ENCODE measurements at regions of chr9 and their contacts with region 1.

Region 1: DNA sequence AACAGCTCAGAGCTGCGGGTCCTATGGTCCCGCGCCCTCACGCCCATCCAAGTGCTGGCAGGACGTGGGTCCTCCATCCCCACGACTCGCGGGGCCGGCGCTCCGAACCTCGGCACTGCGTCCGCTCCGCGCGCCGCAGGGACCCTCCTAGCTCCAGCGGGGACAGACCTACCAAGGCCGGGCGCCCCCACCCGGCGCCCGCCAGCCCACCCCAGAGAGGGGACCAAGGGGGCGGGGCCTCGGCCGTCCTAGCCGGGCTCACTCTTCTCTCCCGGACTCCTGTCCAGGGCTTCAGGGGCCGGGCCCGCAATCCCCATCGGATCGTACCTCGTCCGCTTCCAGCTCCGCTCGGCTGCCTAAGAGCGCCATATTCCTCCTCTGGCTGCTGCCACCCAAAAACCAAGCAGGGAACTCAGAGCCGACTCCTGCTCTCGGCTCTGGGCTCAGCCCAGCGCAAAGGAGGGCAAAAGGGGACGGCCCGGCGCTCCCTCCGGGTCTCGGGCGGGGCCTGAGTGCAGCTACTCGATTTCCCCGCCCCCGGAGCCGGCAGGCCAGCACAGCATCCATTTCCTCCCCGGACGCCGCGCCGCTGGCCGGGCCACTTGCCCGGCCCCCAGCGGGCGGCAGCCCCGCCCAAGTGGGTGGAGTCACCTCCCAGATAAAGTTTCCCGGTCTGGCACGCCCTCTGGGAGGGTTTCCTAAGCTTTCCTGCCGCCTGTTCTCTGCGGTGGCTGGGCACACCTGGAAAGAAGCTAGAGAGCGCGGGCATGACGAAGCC is at the start of gene TTC39B:
- DNase-seq: peak; percentile 71 to 97
- H3K4me3 ChIP-seq: peak within 1 kb of the TSS; percentile 82 to 97
- H3K27ac ChIP-seq: peak within 1 kb of the TSS; percentile 89 to 91
- H3K4me1 ChIP-seq: peaks cover 3 to 4% of the 10 kb centered on the region in 2 donors
- H3K27me3 ChIP-seq: no peaks in the 10 kb centered on the region
- CTCF ChIP-seq: peak in 1 of 3 experiments; percentile 2
- total RNA-seq, gene TTC39B: 2.7 TPM

Region 2: GRCh38 chr9:15249042-15249818 is 57.7 kb before region 1 on chr9:
- intact Hi-C with region 1: loop called (anchors 5 kb)
- DNase-seq: no peak
- H3K4me3 ChIP-seq: peak overlapping the region in 1 of 2 donors; percentile 45
- H3K27ac ChIP-seq: peak overlapping the region; percentile 70 to 80
- H3K4me1 ChIP-seq: peaks cover 4 to 26% of the 10 kb centered on the region in 2 donors
- H3K27me3 ChIP-seq: no peaks in the 10 kb centered on the region
- CTCF ChIP-seq: no peak

Region 3: DNA sequence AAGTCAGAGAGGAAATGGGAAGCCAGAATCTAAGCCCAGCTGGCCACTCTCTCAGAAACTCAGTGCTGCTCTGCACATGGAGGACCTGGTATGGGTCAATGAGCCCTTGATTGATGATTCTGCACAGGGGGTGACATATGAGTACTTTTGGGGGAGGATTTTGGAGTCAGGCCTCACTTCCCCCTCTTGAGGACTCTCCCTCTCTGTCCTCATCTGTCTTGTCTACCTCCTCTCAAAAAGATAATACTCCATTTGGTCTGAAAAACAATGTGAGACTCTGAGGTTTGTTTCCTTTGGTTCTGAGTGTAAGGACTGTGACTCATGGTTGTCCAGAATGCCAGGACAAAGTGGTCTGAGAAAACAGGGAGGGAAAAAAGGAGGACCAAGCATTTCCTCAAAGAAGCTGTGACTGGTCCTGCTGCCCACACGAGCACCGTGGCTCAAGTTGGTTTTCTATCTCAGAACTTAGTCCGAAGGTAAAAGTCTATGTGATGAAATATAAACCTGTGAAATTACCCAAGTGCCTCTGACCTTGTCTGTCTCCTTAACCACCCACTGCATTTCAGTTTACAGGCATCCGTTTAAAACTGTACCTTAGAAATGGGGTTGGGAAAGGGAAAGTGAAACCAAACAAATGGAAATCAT is 11.1 kb before region 1 on chr9:
- intact Hi-C with region 1: loop called (anchors 1 kb)
- DNase-seq: no peak
- H3K4me3 ChIP-seq: peak overlapping the region; percentile 64 to 68
- H3K27ac ChIP-seq: peak overlapping the region; percentile 88 to 92
- H3K4me1 ChIP-seq: peaks cover 10 to 33% of the 10 kb centered on the region in 2 donors
- H3K27me3 ChIP-seq: no peaks in the 10 kb centered on the region
- CTCF ChIP-seq: no peak

Region 4: DNA sequence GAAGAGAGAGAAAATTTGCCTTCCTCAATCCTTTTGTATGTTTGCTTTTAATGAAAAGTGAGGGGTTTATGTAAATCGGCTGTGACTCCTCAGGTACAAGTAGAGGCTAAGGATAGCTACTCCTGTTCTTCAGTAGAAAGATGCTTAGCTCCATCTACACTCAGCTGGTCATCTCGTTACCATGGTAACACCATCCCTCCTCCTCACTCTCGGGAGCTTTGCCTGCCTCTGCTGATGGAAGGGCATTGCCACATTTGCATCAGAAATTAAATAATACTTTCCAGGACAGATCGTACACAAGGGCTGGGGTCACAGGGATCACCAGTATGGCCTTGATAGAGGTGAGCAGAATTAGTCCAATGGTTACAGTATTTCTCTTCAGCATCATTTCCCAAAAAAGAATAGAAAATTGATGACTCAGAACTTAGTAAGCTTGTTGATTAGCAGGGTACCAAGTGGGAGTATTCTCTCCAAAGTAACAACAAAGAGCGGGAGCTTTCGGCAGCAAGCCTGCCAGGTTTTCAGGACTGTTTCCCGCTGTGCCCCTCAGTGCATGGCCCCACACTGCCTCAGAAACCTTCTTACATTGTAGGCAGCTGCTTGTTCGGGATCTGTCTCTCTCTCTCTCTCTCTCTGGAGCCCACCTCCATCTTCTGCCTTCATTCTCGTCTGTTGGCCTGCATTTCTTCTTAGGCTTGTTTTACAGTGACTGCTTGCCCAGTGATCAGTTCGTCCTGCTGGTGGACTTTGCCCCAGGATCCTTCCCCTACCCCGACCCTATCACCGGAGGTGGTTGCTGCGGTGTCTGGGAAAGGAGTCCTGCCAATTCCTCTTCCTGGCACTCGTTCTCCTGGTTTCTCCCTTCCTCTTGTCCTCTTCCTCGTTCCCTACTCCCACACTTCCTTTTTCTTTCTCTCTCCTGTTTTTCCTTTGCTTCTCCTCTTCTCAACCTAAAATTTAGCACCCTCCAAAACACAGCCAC is 63.8 kb after region 1 on chr9:
- intact Hi-C with region 1: loop called (anchors 5 kb)
- DNase-seq: no peak
- H3K4me3 ChIP-seq: no peak overlapping the region
- H3K27ac ChIP-seq: no peak overlapping the region
- H3K4me1 ChIP-seq: peaks cover 0 to 2% of the 10 kb centered on the region in 2 donors
- H3K27me3 ChIP-seq: no peaks in the 10 kb centered on the region
- CTCF ChIP-seq: no peak

Region 5: DNA sequence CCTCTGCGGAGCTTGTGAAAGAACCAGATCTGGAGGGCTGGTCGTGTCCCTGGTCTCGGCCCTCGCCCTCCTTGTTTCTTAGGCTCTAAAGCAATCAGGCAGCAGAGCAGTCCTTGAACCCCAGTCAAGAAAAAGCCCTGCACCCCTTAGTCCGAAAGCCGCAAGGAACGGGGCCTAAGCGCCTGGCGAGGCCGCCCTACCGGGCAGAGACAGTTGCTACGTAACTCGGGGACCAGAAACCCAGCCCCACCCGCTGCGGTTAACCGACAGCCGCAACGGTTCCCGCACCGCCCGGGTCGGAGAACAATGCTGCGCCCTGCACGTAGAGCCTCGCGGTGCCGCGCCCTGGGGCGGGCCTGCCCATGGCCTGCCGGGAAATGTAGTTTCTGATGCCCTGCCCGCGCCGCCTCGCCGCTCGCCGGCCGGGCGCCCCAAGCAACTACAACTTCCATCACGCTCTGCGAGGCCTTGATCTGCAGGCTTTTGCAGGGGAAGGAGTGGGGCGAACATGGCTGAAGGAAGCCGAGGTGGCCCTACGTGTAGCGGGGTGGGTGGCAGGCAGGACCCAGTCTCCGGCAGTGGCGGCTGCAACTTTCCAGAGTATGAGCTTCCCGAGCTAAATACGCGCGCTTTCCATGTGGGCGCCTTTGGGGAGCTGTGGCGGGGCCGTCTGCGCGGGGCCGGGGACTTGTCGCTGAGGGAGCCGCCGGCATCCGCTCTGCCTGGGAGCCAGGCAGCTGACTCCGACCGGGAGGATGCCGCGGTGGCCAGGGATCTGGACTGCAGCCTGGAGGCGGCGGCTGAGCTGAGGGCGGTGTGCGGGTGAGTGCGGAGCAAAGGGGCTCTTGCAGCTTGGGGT is 115.7 kb after region 1 on chr9 and contains the start of gene SNAPC3:
- intact Hi-C with region 1: loop called (anchors 5 kb)
- DNase-seq: peak; percentile 75 to 95
- H3K4me3 ChIP-seq: peak within 1 kb of the TSS; percentile 85 to 87
- H3K27ac ChIP-seq: peak within 1 kb of the TSS; percentile 84 to 89
- H3K4me1 ChIP-seq: peaks cover 0 to 17% of the 10 kb centered on the region in 2 donors
- H3K27me3 ChIP-seq: no peaks in the 10 kb centered on the region
- CTCF ChIP-seq: peak in 1 of 3 experiments; percentile 4
- total RNA-seq, gene SNAPC3: 8.8 TPM

Region 6: GRCh38 chr9:15552636-15553527 is 245.9 kb after region 1 on chr9 and contains the start of gene CCDC171:
- intact Hi-C with region 1: loop called (anchors 5 kb)
- DNase-seq: peak; percentile 72 to 95
- H3K4me3 ChIP-seq: peak within 1 kb of the TSS; percentile 74 to 75
- H3K27ac ChIP-seq: peak within 1 kb of the TSS; percentile 78 to 84
- H3K4me1 ChIP-seq: peaks cover 0 to 5% of the 10 kb centered on the region in 2 donors
- H3K27me3 ChIP-seq: no peaks in the 10 kb centered on the region
- CTCF ChIP-seq: peak in 1 of 3 experiments; percentile 7
- total RNA-seq, gene CCDC171: 1.7 TPM

Measured in ascending aorta (tissue), 2 donors.